ENCODE measurements at regions of chr9 and their contacts with region 1.

Region 1: DNA sequence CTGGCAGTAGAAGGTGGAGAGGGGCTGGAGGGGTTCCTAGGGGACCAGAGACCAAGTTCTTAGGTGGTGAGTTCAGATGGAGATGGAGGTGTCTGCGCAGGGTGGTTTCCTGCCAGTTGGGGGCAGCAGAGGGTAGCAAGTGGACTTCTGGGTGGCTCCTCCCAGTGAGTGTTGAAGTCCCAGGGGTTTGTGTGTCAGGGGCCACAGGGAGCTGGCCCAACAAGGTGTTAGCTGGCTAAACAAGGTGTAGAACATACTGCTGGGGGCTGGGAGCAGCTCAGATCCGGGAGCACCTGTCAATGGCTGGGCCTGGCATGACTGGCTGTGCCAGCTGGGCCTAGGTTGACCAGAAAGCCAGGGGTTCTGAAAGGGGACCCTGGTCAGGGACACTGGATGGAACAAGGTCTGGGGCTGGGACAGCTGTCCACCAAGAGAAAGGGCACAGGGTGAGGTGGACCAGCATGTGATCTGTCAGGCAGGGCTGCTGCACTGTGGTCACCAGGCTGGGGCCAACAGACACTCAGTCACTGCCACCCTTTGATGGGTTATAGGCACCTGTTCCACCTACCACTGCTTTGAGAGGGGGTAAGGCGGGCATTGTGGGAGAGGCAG is 35.6 kb downstream of the DAB2IP start:
- DNase-seq: peak; percentile 83
- ATAC-seq: peak; percentile 90
- H3K4me3 Mint-ChIP-seq: no peak overlapping the region
- H3K27ac Mint-ChIP-seq: no peak overlapping the region
- H3K4me1 Mint-ChIP-seq: no peaks in the 10 kb centered on the region
- H3K27me3 Mint-ChIP-seq: peaks cover 6% of the 10 kb centered on the region

Region 2: DNA sequence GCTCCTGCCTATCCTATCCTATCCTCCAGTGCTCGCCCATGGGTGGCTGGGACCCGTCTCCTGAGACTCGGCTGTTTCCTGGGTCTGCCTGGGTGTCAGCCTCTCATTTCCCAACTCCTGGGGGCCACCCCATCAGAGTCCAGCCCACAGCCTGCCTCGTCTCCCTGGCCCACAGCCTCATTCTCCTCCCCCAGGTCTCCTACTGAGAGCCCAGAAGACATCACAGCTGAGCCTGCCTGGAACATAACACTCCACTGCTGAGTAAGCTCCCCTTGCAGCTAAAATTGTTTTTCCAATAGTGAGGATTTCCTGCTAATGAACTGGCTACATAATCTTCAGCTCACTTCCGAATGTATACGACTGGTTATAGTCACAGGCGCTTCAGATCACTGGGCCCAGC is 310.8 kb after region 1 on chr9:
- CTCF ChIA-PET with region 1: interaction called, 16 read pairs
- DNase-seq: no peak
- ATAC-seq: no peak
- H3K4me3 Mint-ChIP-seq: no peak overlapping the region
- H3K27ac Mint-ChIP-seq: no peak overlapping the region
- H3K4me1 Mint-ChIP-seq: no peaks in the 10 kb centered on the region
- H3K27me3 Mint-ChIP-seq: no peaks in the 10 kb centered on the region

Measured in activated CD8-positive, alpha-beta memory T cell treated with anti-CD3 and anti-CD28 coated beads, Interleukin-2, amount 10 ng/mL, durations not matched to agents 7 days and 5 days (primary cell).